Activated T-helper 1 cell treated with anti-CD3 and anti-CD28 coated beads, Interleukin-12 subunit alpha, Interleukin-12 subunit beta, Interleukin-2, Interleukin-4 antibody, amounts not matched to agents 30 ng/mL and 10 ng/mL and 1 ng/mL, durations not matched to agents 14 hours and 24 hours and 36 hours (primary cell): ENCODE measurements at regions of chr1 and their contacts with region 1.

Region 1: DNA sequence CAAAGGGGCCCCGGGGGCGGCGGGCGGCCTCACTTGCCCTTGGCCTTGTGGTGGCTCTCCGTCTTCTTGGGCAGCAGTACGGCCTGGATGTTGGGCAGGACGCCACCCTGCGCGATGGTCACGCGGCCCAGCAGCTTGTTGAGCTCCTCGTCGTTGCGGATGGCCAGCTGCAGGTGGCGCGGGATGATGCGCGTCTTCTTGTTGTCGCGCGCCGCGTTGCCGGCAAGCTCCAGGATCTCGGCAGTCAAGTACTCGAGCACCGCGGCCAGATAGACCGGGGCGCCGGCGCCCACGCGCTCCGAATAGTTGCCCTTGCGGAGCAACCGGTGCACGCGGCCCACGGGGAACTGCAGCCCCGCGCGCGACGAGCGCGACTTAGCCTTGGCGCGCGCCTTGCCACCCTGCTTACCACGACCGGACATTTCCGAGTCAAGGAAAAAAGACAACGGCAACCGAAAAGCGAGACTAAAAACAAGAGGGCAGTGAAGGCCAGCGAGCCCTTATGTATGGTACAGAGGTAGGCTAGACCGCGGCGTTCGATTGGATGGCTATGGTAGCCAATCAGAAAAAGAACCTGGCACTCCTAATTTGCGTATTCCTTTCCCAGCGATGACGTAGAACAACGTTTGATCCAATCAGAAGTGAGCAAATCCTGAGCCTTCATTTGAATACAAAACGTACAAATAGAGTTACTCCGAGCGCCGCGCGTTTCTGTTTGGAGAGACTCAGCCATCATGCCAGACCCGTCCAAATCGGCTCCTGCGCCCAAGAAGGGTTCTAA is 29.6 kb upstream of the RNF187 start:
- DNase-seq: peak; percentile 89
- H3K4me3 Mint-ChIP-seq: peak overlapping the region; percentile 99
- H3K27ac Mint-ChIP-seq: peak overlapping the region; percentile 100
- H3K4me1 Mint-ChIP-seq: peaks cover 59% of the 10 kb centered on the region
- H3K27me3 Mint-ChIP-seq: peaks cover 2% of the 10 kb centered on the region

Region 2: DNA sequence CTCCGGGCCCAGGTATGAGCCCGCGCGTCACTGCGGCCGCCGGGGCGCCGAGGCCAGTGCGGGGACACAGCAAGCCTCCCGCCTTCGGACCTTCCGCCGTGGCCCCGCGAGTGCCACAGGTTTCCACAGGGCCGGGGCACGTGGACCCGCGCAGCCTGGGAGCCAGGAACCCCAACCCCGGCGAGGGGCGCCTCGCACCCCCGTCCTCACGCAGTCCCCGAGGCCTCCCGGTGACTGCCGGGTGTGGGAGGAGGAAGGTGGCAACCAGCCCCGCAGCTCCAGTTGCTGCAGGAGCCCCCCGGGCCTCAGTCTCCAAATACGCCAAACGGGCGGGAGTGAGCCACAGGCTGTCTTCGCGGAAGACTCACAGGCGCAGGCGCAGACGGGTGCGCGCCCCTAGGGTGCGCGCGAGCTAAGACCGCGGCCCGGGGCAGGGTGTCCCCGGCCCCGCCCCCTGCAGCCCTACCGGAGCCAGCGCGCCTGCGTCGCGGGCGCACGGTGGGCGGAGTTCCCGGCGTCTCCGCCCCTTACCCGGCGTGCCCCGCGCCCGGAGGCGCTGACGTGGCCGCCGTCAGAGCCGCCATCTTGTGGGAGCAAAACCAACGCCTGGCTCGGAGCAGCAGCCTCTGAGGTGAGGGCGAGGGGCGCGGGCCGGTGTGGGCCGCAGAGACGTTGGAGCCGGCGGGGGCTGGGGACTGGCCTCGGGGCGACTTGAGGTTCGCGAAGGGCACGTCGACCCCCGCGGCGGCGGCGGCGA is 375.3 kb before region 1 on chr1 and contains the start of gene ARF1:
- intact Hi-C with region 1: loop called (anchors 1 kb)
- DNase-seq: peak; percentile 91
- H3K4me3 Mint-ChIP-seq: peak within 1 kb of the TSS; percentile 97
- H3K27ac Mint-ChIP-seq: peak within 1 kb of the TSS; percentile 91
- H3K4me1 Mint-ChIP-seq: peaks cover 37% of the 10 kb centered on the region
- H3K27me3 Mint-ChIP-seq: no peaks in the 10 kb centered on the region
- total RNA-seq, gene ARF1: 404 TPM in 2 replicates

Region 3: GRCh38 chr1:228139944-228140656 is 317.5 kb before region 1 on chr1 and contains the start of gene GUK1:
- intact Hi-C with region 1: loop called (anchors 2 kb)
- DNase-seq: peak; percentile 100
- H3K4me3 Mint-ChIP-seq: peak within 1 kb of the TSS; percentile 100
- H3K27ac Mint-ChIP-seq: peak within 1 kb of the TSS; percentile 97
- H3K4me1 Mint-ChIP-seq: peaks cover 22% of the 10 kb centered on the region
- H3K27me3 Mint-ChIP-seq: peaks cover 21% of the 10 kb centered on the region
- total RNA-seq, gene GUK1: 201 and 202 TPM in 2 replicates

Region 4: GRCh38 chr1:228378090-228378872 is 79.3 kb before region 1 on chr1:
- intact Hi-C with region 1: loop called (anchors 1 kb)
- DNase-seq: peak; percentile 41
- H3K4me3 Mint-ChIP-seq: peak overlapping the region; percentile 79
- H3K27ac Mint-ChIP-seq: no peak overlapping the region
- H3K4me1 Mint-ChIP-seq: no peaks in the 10 kb centered on the region
- H3K27me3 Mint-ChIP-seq: peaks cover 25% of the 10 kb centered on the region

Region 5: DNA sequence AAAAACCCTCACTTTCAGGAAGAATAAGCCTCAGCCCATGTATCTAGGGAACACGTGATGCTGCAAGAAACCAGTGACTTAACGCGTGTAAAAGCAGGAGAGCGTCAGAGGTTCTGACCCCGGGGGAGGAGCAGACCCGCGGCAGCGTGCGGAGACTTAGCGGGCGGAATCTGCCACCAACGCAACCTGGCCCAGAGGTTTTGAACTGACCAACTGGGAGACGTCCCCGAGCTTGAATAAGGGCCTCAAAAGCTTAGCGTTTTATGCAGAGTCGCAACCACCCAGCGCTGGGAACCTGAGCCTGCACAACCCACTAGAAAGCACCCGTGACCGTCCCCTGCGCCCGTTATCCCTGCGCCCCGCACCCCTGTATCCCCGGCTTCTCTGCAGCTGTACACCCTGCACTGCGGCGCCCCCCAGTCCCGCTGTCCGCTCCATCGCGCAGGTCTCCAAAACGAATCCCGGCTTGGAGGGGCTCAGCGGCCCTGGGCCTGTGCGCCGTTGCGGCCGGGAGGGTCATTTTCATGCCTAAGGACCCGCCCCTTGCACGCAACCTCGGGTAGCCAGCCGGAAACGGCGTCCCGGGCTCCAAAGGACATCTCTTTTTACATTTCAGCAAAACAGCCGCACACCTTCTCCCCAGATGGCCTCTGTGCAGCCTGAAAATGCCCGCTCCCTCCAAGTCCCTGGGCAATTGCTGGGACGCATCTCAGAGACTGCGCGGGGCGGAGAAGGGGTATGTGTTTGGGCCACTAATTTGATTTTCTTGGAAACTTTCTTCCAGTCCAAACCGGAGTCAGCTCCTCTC is 11.5 kb before region 1 on chr1:
- intact Hi-C with region 1: loop called (anchors 1 kb)
- DNase-seq: peak; percentile 28
- H3K4me3 Mint-ChIP-seq: peak overlapping the region; percentile 82
- H3K27ac Mint-ChIP-seq: peak overlapping the region; percentile 66
- H3K4me1 Mint-ChIP-seq: peaks cover 23% of the 10 kb centered on the region
- H3K27me3 Mint-ChIP-seq: peaks cover 26% of the 10 kb centered on the region

Region 6: DNA sequence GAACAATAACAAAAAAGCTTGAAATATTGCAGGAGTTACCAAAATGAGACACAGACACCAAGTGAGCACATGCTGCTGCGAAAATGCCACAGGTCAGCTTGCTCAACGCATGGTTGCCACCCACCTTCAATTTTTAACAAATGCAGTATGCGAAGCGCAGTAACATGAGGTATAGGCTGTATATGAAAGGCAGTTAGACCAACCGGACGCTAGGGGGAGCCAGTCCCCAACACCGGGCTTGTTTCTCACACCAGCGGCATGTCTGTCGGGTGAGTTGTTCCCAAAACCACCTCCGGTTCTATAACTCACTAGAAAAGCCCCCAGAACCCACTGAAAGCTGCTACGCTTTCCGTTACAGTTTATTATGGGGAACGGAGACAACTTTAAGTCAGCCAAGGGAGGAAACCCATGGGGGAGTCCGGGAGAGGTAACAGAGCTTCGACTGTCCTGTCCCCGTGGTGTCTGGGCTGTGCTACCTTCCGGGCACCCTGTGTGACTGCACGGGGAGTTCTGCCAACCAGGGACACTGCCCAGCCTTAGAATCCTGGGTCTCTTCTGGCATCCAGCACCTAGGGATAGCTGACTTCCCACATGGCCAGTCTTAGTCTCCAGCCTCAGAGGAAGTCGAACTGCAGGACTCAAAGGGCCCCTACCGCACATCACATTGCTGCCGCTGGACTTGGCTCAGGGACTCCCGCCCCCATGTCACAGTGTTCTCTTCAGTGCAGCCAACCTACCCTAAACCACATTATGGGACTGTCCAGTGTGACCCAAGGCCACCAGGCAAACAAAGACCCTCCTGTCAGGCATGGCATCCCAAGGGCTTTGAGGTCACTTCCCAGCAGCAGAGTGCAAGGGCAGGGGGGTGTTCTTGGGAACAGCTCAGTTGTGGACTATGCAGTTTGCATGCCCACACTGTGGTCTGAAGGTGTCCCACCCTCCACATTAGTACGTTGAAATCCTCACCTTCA is 43.6 kb after region 1 on chr1:
- intact Hi-C with region 1: loop called (anchors 1 kb)
- DNase-seq: peak; percentile 77
- H3K4me3 Mint-ChIP-seq: peak overlapping the region; percentile 74
- H3K27ac Mint-ChIP-seq: no peak overlapping the region
- H3K4me1 Mint-ChIP-seq: peaks cover 26% of the 10 kb centered on the region
- H3K27me3 Mint-ChIP-seq: peaks cover 7% of the 10 kb centered on the region